ENCODE measurements at regions of chr3 and their contacts with region 1.

Region 1: GRCh38 chr3:122146466-122146865 is 37.0 kb upstream of the CASR start:
- DNase-seq: peak; percentile 86
- H3K4me3 Mint-ChIP-seq: no peak overlapping the region
- H3K27ac Mint-ChIP-seq: peak overlapping the region; percentile 46
- H3K4me1 Mint-ChIP-seq: peaks cover 28% of the 10 kb centered on the region
- H3K27me3 Mint-ChIP-seq: peaks cover 1% of the 10 kb centered on the region

Region 2: DNA sequence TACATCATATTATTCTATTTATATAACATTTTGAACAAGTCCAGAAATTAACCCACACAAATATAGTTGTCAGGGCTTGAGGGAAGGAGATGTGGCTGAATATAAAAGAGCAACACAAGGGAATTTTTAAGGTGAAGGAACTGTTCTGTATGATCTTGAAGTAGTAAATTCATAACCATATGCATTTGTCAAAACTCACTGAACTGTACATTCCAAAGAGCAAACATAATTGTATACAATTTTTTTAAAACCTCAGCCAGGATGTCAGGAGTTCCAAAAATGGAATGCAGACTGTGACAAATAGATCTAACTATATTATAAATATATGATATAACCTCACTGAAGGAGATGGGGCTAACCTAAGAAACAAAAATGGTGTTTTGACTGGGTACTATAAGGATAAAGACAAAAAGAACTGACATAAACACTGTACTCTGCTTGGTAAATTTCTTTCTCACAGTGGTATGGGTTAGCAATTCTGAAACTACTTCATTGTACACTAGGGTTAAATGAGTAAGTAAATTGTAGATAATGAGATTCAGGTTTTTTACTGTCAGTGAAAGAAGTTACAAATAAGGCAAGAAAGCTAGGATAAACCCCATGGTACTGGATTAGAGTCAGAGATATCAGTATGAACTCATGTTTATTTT is 411.3 kb before region 1 on chr3:
- CTCF ChIA-PET with region 1: no interaction called
- intact Hi-C with region 1: loop called (anchors 1 kb)
- DNase-seq: no peak
- H3K4me3 Mint-ChIP-seq: no peak overlapping the region
- H3K27ac Mint-ChIP-seq: peak overlapping the region; percentile 0
- H3K4me1 Mint-ChIP-seq: peaks cover 38% of the 10 kb centered on the region
- H3K27me3 Mint-ChIP-seq: no peaks in the 10 kb centered on the region

Region 3: DNA sequence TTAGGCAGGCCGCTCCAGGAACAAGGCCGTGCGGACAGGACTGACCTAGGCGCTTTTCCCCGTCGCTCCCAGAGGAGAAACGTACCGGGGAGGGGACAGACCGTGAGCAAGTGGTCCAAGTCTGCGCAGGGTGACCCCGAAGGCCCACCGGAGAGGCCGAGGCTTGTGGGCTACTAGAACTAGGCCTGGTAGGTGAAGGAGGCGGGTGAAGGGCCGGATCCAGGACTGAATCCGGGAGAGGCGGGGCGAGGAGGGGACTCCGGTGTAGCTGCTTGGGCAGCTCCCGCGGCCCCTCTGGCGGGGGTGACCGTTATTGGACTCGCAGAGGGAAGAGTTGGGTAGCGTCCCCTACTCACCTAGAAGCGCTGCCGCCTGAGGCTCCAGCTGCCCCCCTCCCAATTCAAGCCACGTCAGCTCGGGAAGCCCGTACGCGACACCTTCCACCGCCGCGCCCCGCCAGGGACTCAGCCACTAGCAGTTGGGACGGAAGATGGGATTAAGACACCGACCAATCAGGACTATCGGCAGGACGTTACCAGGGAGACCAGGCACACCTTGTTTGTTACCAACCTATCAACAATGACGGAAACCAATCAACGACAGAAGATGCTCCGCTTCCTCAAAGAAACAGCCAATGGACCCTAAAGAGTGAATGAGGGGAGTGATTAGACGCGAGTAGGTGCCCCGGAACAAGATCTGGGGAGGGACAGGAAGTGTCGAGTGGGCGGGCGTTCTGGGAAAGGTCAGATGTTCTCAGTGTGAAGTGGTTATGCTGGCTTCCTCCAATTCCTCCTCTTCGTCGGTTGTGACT is 397.0 kb before region 1 on chr3 and contains the start of gene GOLGB1:
- CTCF ChIA-PET with region 1: no interaction called
- intact Hi-C with region 1: loop called (anchors 5 kb)
- DNase-seq: peak; percentile 97
- H3K4me3 Mint-ChIP-seq: no peak within 1 kb of the TSS
- H3K27ac Mint-ChIP-seq: no peak within 1 kb of the TSS
- H3K4me1 Mint-ChIP-seq: peaks cover 5% of the 10 kb centered on the region
- H3K27me3 Mint-ChIP-seq: no peaks in the 10 kb centered on the region
- total RNA-seq, gene GOLGB1: 18.2 to 19.7 TPM

Region 4: GRCh38 chr3:122123850-122124249 is 22.6 kb before region 1 on chr3:
- CTCF ChIA-PET with region 1: no interaction called
- intact Hi-C with region 1: loop called (anchors 1 kb)
- DNase-seq: no peak
- H3K4me3 Mint-ChIP-seq: no peak overlapping the region
- H3K27ac Mint-ChIP-seq: no peak overlapping the region
- H3K4me1 Mint-ChIP-seq: peaks cover 7% of the 10 kb centered on the region
- H3K27me3 Mint-ChIP-seq: peaks cover 22% of the 10 kb centered on the region

Region 5: GRCh38 chr3:122245513-122246174 is 99.2 kb after region 1 on chr3:
- CTCF ChIA-PET with region 1: interaction called, 3 read pairs
- intact Hi-C with region 1: loop called (anchors 1 kb)
- DNase-seq: no peak
- H3K4me3 Mint-ChIP-seq: peak overlapping the region; percentile 47
- H3K27ac Mint-ChIP-seq: no peak overlapping the region
- H3K4me1 Mint-ChIP-seq: peaks cover 20% of the 10 kb centered on the region
- H3K27me3 Mint-ChIP-seq: peaks cover 7% of the 10 kb centered on the region

Region 6: GRCh38 chr3:122258757-122259371 is 112.4 kb after region 1 on chr3:
- CTCF ChIA-PET with region 1: interaction called, 3 read pairs
- intact Hi-C with region 1: loop called (anchors 1 kb)
- DNase-seq: peak; percentile 85
- H3K4me3 Mint-ChIP-seq: no peak overlapping the region
- H3K27ac Mint-ChIP-seq: no peak overlapping the region
- H3K4me1 Mint-ChIP-seq: peaks cover 14% of the 10 kb centered on the region
- H3K27me3 Mint-ChIP-seq: peaks cover 10% of the 10 kb centered on the region

Region 7: DNA sequence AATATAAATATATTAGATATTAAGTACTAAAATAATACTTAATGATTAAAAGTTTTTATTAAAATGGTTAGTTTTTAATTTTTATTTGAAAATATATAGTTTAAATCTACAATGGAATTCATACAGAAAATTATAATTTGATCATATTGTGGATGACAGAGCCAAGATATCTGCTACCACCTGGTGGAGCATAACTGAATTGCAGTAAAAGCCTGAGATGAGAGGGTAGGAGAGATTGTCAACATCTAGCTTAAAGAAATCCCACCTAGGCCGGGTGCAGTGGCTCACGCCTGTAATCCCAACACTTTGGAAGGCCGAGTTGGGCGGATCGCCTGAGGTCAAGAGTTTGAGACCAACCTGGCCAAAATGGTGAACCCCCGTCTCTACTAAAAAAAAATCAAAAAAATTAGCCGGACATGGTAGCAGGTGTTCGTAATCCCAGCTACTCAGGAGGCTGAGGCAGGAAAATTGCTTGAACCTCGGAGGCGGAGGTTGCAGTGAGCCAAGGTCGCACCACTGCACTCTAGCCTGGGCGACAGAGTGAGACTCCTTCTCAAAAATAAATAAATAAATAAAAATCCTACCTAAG is 153.5 kb after region 1 on chr3:
- CTCF ChIA-PET with region 1: no interaction called
- intact Hi-C with region 1: loop called (anchors 1 kb)
- DNase-seq: peak; percentile 64
- H3K4me3 Mint-ChIP-seq: no peak overlapping the region
- H3K27ac Mint-ChIP-seq: no peak overlapping the region
- H3K4me1 Mint-ChIP-seq: peaks cover 16% of the 10 kb centered on the region
- H3K27me3 Mint-ChIP-seq: peaks cover 1% of the 10 kb centered on the region

Region 8: DNA sequence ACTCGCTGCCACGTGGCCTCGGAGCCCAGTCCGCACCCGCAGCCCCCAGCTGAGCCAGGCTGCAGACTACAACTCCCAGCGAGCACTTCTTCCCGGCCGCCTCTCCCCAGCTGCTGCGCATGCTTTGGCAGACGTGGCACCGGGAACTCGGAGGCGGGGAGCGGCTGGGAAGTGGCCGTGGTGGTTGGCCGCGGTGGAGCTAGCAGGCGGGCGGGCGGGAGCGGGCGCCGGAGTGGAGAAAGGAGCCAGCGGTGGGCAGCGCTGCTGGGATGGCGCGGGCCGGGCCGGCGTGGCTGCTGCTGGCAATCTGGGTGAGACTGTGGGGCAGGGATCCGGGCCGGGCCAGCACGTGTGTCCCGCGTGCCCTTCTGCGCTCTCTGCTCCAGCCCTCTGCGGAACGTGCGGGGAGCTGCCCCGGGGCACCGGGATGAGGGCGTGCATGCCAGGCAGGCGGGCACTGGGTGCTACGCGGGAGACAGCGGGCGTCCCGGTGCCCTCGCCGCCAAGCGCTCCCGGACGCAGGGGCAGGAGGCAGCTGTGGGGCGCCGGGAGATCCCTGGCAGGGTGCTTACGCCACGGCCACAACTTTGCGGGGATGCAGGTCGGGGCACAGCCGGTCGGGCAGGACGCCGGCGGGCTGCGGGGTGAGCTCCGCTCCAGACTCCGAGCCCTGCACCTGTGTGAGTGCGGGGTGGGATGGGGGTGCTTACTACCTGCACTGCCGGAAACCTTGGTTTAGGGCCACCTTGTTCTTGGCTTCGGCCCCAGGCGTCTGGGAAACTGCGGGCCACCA is 920.6 kb after region 1 on chr3 and contains the start of gene PDIA5:
- CTCF ChIA-PET with region 1: no interaction called
- intact Hi-C with region 1: no loop called
- DNase-seq: peak; percentile 83
- H3K4me3 Mint-ChIP-seq: peak within 1 kb of the TSS; percentile 81
- H3K27ac Mint-ChIP-seq: peak within 1 kb of the TSS; percentile 40
- H3K4me1 Mint-ChIP-seq: peaks cover 34% of the 10 kb centered on the region
- H3K27me3 Mint-ChIP-seq: no peaks in the 10 kb centered on the region
- total RNA-seq, gene PDIA5: 20.7 to 21.2 TPM

Measured in activated naive CD4-positive, alpha-beta T cell treated with anti-CD3 and anti-CD28 coated beads for 36 hours (primary cell).